IMR-90 (cell line): ENCODE measurements at regions of chr5 and their contacts with region 1.

Region 1: DNA sequence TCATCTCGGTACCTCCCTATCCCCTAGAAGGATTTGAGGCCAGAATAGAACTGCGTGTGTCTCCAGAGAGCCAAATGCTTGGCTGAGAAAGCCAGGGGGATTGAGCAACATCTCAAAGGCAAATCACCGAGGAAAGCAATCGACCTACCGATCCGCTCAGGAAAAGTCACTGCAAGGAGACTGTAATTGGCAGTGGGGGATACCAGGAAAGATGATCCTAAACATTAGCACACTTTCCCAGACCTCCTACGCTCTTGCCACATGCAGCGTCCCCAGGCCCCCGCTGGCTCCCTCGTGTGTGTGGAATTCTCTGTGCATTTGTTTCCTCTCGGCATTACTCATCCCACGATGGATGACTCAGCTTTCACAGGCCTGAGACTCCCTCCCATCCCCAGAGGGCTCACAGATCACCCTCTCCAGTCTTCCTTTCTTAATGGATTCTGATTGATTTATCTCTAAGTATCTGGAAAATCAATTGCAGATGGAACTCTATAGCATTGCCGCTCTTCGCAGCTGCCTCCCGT is 82.2 kb upstream of the ICE1 start:
- DNase-seq: peak; percentile 83
- ATAC-seq: peak; percentile 94
- H3K4me3 ChIP-seq: 0 out of 2 replicates have a peak overlapping the region, but pooled peaks have one; percentile 4
- H3K27ac ChIP-seq: no peak overlapping the region
- H3K4me1 ChIP-seq: no peaks in the 10 kb centered on the region
- H3K27me3 ChIP-seq: no peaks in the 10 kb centered on the region
- CTCF ChIP-seq: peak; percentile 72
- POLR2A ChIP-seq: no peak
- RAD21 ChIP-seq: peak; percentile 41; the same call in 1 of the 2 replicates

Region 2: DNA sequence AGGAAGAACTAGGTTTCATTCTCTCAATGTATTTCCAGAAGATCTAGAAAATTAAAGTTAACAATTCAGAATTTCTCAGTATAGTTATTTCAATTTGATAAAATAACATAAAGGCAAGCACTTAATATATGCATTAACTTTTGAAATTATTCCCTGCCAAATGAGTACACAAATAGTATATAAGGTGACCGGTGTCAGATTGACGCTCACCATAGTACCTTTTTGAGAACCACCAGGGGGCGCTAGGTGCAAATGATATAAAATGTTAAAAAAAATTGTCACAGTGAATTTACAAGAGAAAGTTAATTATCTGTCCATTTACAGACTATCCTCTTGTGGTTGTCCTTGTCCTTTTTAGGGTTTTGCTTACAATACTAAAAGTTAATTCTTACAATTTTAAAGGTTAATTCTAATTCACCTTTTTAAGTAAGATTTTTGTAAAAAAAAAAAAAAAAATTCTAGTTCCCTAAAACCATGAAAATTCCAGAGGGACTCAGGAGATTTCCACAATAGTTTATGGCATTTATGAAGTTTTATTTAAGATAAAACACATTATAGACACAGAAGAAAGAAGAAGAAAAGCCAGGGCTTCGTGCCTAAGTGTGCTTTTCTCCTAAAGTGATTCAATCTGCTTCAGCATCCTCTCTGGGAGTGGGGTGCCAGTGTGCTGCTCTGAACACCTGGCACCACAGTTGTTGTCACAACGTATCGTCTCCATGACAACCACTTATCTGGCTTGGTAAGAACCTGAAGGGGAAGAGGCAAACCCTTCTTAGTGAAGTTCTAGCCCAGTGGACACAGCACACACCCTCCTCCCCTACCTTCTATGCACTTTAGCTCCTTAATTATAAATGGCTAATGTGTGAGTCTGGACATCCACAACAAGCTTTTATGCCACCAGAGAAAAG is 198.4 kb before region 1 on chr5:
- CTCF ChIA-PET with region 1: no interaction called
- POLR2A ChIA-PET with region 1: no interaction called
- dilution Hi-C with region 1: no loop called
- in situ Hi-C with region 1: no loop called
- intact Hi-C with region 1: loop called (anchors 2 kb)
- DNase-seq: peak; percentile 51
- ATAC-seq: peak; percentile 61; the same call in 1 of the 2 replicates
- H3K4me3 ChIP-seq: no peak overlapping the region
- H3K27ac ChIP-seq: no peak overlapping the region
- H3K4me1 ChIP-seq: no peaks in the 10 kb centered on the region
- H3K27me3 ChIP-seq: peaks cover 14% of the 10 kb centered on the region
- CTCF ChIP-seq: peak; percentile 62
- POLR2A ChIP-seq: no peak
- RAD21 ChIP-seq: peak; percentile 67

Region 3: GRCh38 chr5:6279607-6280006 is 939.3 kb after region 1 on chr5:
- CTCF ChIA-PET with region 1: no interaction called
- POLR2A ChIA-PET with region 1: no interaction called
- dilution Hi-C with region 1: no loop called
- in situ Hi-C with region 1: no loop called
- intact Hi-C with region 1: no loop called
- DNase-seq: no peak
- ATAC-seq: no peak
- H3K4me3 ChIP-seq: no peak overlapping the region
- H3K27ac ChIP-seq: no peak overlapping the region
- H3K4me1 ChIP-seq: no peaks in the 10 kb centered on the region
- H3K27me3 ChIP-seq: no peaks in the 10 kb centered on the region
- CTCF ChIP-seq: no peak
- POLR2A ChIP-seq: no peak
- RAD21 ChIP-seq: no peak